ENCODE measurements at regions of chr7 and their contacts with region 1.

Region 1: GRCh38 chr7:43582503-43583423 is at the start of gene STK17A:
- DNase-seq: peak; percentile 82
- ATAC-seq: peak; percentile 66
- H3K4me3 ChIP-seq: peak within 1 kb of the TSS; percentile 84
- H3K27ac ChIP-seq: peak within 1 kb of the TSS; percentile 98
- H3K4me1 ChIP-seq: peaks cover 5% of the 10 kb centered on the region
- H3K27me3 ChIP-seq: no peaks in the 10 kb centered on the region
- CTCF ChIP-seq: peak; percentile 99 to 100 (median 100); a peak in 5 of 6 replicates
- EP300 ChIP-seq: no peak
- POLR2A ChIP-seq: peak; percentile 93
- RAD21 ChIP-seq: peak; percentile 100
- polyA plus RNA-seq, gene STK17A: 18.5 to 27.6 TPM

Region 2: DNA sequence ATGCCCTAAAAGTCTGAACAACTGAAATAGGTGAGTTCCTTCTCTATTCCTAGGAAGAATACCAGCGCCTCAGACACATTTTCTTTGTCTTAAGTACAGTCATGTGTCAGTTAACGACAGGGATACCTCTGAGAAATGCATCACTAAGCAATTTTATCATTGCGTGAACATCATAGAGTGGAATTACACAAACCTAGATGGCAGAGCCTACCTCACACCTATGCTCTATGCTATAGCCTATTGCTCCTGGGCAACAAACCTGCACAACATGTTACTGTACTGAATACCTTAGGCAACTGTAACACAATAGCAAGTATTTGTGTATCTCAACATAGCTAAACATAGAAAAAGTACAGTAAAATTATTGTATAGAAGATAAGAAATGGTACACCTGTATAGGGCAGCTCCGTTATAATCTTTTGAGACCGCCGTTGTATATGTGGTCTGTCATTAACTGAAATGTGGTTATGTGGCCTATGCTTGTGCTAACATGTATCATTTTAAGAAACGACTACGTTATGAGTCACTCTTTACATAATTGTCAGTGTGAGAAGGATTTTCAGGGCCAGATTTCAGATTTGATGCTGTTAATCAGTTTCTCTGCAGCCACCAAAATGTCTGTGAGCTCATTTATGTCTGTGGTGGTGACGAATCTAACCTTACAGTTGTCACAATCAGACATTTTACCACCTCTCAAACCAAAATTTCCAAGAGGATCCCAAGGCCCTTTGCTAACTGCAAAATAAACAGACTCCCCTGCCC is 66.0 kb before region 1 on chr7:
- CTCF ChIA-PET with region 1: interaction called, 13 read pairs
- POLR2A ChIA-PET with region 1: interaction called, 3 read pairs
- RAD21 ChIA-PET with region 1: interaction called, 20 read pairs
- SMC1A ChIA-PET with region 1: interaction called, 8 read pairs
- in situ Hi-C with region 1: no loop called
- intact Hi-C with region 1: no loop called
- DNase-seq: peak; percentile 48
- ATAC-seq: peak; percentile 94
- H3K4me3 ChIP-seq: no peak overlapping the region
- H3K27ac ChIP-seq: no peak overlapping the region
- H3K4me1 ChIP-seq: peaks cover 3% of the 10 kb centered on the region
- H3K27me3 ChIP-seq: no peaks in the 10 kb centered on the region
- CTCF ChIP-seq: no peak
- EP300 ChIP-seq: peak; percentile 85 to 90; a peak in 3 of 4 replicates
- POLR2A ChIP-seq: no peak
- RAD21 ChIP-seq: no peak

Region 3: GRCh38 chr7:43625453-43625852 is 42.7 kb after region 1 on chr7:
- CTCF ChIA-PET with region 1: interaction called, 22 read pairs
- POLR2A ChIA-PET with region 1: interaction called, 6 read pairs
- RAD21 ChIA-PET with region 1: interaction called, 23 read pairs
- SMC1A ChIA-PET with region 1: interaction called, 19 read pairs
- in situ Hi-C with region 1: no loop called
- intact Hi-C with region 1: loop called (anchors 2 kb)
- DNase-seq: no peak
- ATAC-seq: peak; percentile 88
- H3K4me3 ChIP-seq: no peak overlapping the region
- H3K27ac ChIP-seq: peak overlapping the region; percentile 25; the same call in 1 of the 2 replicates
- H3K4me1 ChIP-seq: peaks cover 28% of the 10 kb centered on the region
- H3K27me3 ChIP-seq: no peaks in the 10 kb centered on the region
- CTCF ChIP-seq: no peak
- EP300 ChIP-seq: peak; percentile 8 to 67; a peak in 3 of 4 replicates
- POLR2A ChIP-seq: no peak
- RAD21 ChIP-seq: no peak

Region 4: GRCh38 chr7:43686991-43687390 is 104.2 kb after region 1 on chr7:
- CTCF ChIA-PET with region 1: interaction called, 25 read pairs
- POLR2A ChIA-PET with region 1: interaction called, 8 read pairs
- RAD21 ChIA-PET with region 1: interaction called, 19 read pairs
- SMC1A ChIA-PET with region 1: interaction called, 30 read pairs
- in situ Hi-C with region 1: loop called (anchors 10 kb)
- intact Hi-C with region 1: no loop called
- DNase-seq: no peak
- ATAC-seq: no peak
- H3K4me3 ChIP-seq: no peak overlapping the region
- H3K27ac ChIP-seq: no peak overlapping the region
- H3K4me1 ChIP-seq: peaks cover 9% of the 10 kb centered on the region; the same call in 1 of the 2 replicates
- H3K27me3 ChIP-seq: no peaks in the 10 kb centered on the region
- CTCF ChIP-seq: no peak
- EP300 ChIP-seq: no peak
- POLR2A ChIP-seq: no peak
- RAD21 ChIP-seq: no peak

Region 5: GRCh38 chr7:43729214-43729923 is 146.6 kb after region 1 on chr7 and contains the start of gene COA1:
- CTCF ChIA-PET with region 1: interaction called, 30 read pairs
- POLR2A ChIA-PET with region 1: interaction called, 10 read pairs
- RAD21 ChIA-PET with region 1: interaction called, 150 read pairs
- SMC1A ChIA-PET with region 1: interaction called, 93 read pairs
- in situ Hi-C with region 1: loop called (anchors 5 kb)
- intact Hi-C with region 1: no loop called
- DNase-seq: peak; percentile 68
- ATAC-seq: peak; percentile 85
- H3K4me3 ChIP-seq: peak within 1 kb of the TSS; percentile 79
- H3K27ac ChIP-seq: peak within 1 kb of the TSS; percentile 74
- H3K4me1 ChIP-seq: peaks cover 13% of the 10 kb centered on the region
- H3K27me3 ChIP-seq: no peaks in the 10 kb centered on the region
- CTCF ChIP-seq: peak in 2 of 3 experiments; percentile 8 to 24; a peak in 1 of 6 replicates
- EP300 ChIP-seq: no peak
- POLR2A ChIP-seq: peak; percentile 86
- RAD21 ChIP-seq: no peak
- polyA plus RNA-seq, gene COA1: 218 to 258 TPM

Region 6: GRCh38 chr7:43799589-43799988 is 216.8 kb after region 1 on chr7:
- CTCF ChIA-PET with region 1: interaction called, 48 read pairs
- POLR2A ChIA-PET with region 1: no interaction called
- RAD21 ChIA-PET with region 1: interaction called, 15 read pairs
- SMC1A ChIA-PET with region 1: interaction called, 22 read pairs
- in situ Hi-C with region 1: no loop called
- intact Hi-C with region 1: no loop called
- DNase-seq: no peak
- ATAC-seq: peak; percentile 63
- H3K4me3 ChIP-seq: no peak overlapping the region
- H3K27ac ChIP-seq: no peak overlapping the region
- H3K4me1 ChIP-seq: no peaks in the 10 kb centered on the region
- H3K27me3 ChIP-seq: no peaks in the 10 kb centered on the region
- CTCF ChIP-seq: peak; percentile 16 to 30 (median 21); a peak in 1 of 6 replicates
- EP300 ChIP-seq: no peak
- POLR2A ChIP-seq: no peak
- RAD21 ChIP-seq: peak; percentile 29; the same call in 1 of the 2 replicates

Region 7: GRCh38 chr7:44264221-44264931 is 681.6 kb after region 1 on chr7:
- CTCF ChIA-PET with region 1: no interaction called
- POLR2A ChIA-PET with region 1: no interaction called
- RAD21 ChIA-PET with region 1: no interaction called
- SMC1A ChIA-PET with region 1: no interaction called
- in situ Hi-C with region 1: no loop called
- intact Hi-C with region 1: no loop called
- DNase-seq: no peak
- ATAC-seq: no peak
- H3K4me3 ChIP-seq: no peak overlapping the region
- H3K27ac ChIP-seq: no peak overlapping the region
- H3K4me1 ChIP-seq: no peaks in the 10 kb centered on the region
- H3K27me3 ChIP-seq: no peaks in the 10 kb centered on the region; a peak in 1 of 4 replicates
- CTCF ChIP-seq: no peak
- EP300 ChIP-seq: no peak
- POLR2A ChIP-seq: no peak
- RAD21 ChIP-seq: no peak

Measured in GM12878 (cell line).